ENCODE measurements at regions of chr11 and their contacts with region 1.

Region 1: DNA sequence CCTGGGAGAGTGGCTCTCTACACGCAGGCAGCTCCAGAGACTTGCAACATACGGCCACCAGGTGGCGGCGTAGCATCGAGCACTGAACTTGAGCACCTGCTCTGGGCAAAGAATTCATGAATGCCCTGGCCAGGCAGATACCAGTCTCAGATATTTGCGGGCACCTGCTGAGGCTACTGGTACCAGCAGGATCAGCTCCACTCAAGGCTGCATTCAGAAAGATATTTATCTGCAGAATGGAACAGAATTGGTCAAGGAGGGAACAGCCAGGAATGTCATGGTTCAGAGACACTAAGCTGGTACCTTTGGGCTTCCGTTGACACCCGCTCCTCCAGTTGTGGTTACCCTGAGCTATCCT is 10.8 kb upstream of the CCDC86 start:
- DNase-seq: peak; percentile 84
- CTCF ChIP-seq: peak; percentile 96

Region 2: GRCh38 chr11:60801194-60801593 is 29.9 kb before region 1 on chr11:
- CTCF ChIA-PET with region 1: interaction called, 14 read pairs
- POLR2A ChIA-PET with region 1: no interaction called
- DNase-seq: no peak
- CTCF ChIP-seq: no peak

Region 3: GRCh38 chr11:60848714-60849151 is 17.6 kb after region 1 on chr11:
- CTCF ChIA-PET with region 1: interaction called, 21 read pairs
- POLR2A ChIA-PET with region 1: no interaction called
- DNase-seq: no peak
- CTCF ChIP-seq: no peak

Region 4: GRCh38 chr11:60906132-60906972 is 75.2 kb after region 1 on chr11 and contains the start of gene PRPF19:
- CTCF ChIA-PET with region 1: interaction called, 157 read pairs
- POLR2A ChIA-PET with region 1: no interaction called
- DNase-seq: peak; percentile 97
- CTCF ChIP-seq: no peak

Region 5: GRCh38 chr11:61173456-61173855 is 342.3 kb after region 1 on chr11:
- CTCF ChIA-PET with region 1: interaction called, 12 read pairs
- POLR2A ChIA-PET with region 1: no interaction called
- DNase-seq: no peak
- CTCF ChIP-seq: peak; percentile 20